GM13976 (cell line): ENCODE measurements at regions of chr3 and their contacts with region 1.

Region 1: DNA sequence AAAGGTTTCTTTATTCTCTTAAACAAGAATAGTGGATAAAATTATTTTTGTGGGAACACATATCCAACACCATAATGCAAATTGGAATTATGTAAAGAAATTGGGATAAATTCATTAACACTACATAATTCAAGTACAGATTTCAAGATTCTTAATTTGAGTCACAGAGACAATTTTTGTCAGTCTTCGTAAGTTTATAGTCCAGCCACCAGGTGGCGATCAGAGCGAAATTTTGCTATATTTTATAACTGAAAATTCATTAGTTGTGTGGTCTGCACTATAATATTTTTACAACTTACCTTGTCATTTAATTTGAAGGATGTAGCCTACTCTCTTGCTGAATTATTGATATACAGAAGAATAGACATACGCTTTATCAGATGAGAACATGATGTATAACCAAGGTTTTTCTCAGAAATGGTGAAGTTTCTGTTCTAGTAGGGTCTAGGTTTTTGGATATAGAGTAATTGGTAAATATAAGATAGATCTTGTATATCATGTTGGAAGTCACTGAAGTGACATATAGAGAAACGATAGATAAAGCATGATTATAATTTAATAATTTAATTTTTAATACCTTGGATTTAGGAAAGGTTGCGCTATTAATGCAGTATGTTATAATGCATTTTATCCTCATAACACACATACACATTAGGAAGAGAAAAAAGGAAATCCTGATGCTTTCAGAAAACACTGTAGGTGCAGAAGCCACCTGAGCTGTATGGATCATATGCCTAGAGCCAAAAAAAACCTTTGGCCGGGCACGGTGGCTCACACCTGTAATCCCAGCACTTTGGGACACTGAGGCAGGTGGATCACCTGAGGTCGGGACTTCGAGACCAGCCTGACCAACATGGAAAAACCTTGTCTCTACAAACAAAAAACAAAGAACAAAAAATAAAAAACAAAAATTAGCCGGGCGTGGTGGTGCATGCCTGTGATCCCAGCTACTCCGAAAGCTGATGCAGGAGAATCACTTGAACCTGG is 31.7 kb downstream of the PLSCR4 start:
- DNase-seq: peak; percentile 41
- CTCF ChIP-seq: peak; percentile 33

Region 2: DNA sequence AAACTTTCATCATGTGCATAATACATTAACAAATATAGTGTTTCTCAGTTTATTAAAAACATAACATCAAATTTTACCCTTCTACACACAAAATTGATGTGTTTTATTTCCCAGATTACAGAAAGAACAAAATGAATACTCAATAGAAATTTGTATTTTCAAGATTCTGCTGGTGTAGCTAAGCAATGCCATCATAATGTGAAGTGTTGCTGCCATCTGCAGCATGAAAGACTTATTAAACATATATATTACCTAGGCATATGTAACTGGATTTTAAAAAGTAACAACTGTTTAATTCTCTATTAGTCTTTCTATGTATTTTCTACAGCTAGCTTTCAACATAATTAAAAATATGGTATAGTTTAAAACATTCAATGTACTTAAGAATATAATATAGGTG is 358.5 kb after region 1 on chr3:
- in situ Hi-C with region 1: loop called (anchors 25 kb)
- DNase-seq: no peak
- CTCF ChIP-seq: peak; percentile 16

Region 3: DNA sequence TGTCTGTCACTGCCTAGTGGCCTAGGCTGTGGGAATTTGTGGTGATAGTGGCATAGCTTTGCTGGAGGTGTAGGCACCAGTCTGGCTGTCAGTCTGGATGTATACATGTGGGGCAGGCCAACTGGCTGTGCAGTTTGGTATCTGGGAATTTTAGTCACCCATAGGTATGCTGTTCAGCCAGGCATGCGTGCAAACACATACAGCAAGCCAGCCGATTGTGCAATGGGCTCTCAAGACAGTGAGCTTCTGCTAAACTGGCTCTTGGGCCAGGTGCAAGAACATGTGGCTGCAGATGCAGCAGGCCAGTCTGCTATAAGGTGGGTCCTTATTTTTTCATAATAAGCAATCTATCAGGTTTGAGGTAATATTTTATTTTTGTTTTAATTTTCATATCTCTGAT is 473.1 kb after region 1 on chr3:
- in situ Hi-C with region 1: no loop called
- DNase-seq: no peak
- CTCF ChIP-seq: no peak